ENCODE measurements at regions of chr4 and their contacts with region 1.

Region 1: DNA sequence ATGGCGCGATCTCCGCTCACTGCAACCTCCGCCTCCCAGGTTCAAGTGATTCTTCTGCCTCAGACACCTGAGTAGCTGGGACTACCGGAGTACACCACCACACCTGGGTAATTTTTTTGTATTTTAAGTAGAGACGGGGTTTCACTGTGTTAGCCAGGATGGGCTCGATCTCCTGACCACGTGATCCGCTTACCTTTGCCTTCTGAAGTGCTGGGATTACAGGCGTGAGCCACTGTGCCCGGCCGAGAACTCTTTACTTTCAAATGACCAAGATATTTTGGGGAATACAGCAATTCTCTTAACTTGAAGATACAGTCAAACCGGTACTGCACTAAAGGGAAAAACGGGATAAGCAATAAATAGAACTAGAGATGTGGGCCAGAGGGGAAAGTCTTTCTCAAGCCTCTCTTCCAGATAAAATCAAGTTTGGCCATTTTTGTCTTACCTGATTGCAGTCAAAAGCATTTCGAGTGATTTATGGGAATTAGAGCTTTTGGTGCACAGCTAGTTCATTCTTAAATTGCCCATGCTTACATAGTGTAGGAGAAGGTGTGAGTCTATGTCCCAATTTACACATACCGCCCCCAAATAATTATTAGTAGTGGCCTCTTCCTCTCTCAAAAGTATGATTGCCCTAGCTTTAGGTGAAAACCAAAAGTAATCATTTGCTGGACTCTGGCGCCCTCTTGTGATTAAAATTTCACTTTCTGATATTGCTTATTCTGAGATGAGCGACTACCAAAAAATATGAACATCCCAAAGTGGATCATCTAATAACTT is 53.2 kb upstream of the ABCG2 start:
- DNase-seq: peak in 1 of 2 donors; percentile 53
- H3K4me3 ChIP-seq: no peak overlapping the region
- CTCF ChIP-seq: peak in 1 of 3 donors; percentile 25
- POLR2A ChIP-seq: no peak

Region 2: DNA sequence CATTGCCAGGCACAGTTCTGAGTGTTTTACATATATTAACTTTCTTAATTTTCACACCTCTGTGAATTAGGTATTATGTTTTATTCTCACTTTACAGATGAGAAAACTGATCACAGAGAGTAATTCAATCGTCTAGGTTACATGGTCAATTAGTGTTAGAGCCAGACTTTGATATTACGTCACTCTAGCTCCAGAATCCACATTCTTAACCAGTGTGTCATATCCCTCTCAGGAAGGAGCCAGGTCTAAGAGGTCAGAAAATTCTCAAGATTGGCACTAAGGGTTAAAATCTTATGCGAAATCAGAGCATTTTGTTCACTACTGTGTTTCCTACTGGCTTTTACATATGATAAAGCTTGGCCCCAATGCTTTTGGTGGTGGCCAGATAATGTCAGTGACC is 554.1 kb before region 1 on chr4:
- intact Hi-C with region 1: no loop called
- DNase-seq: no peak
- H3K4me3 ChIP-seq: no peak overlapping the region
- CTCF ChIP-seq: no peak
- POLR2A ChIP-seq: no peak

Region 3: DNA sequence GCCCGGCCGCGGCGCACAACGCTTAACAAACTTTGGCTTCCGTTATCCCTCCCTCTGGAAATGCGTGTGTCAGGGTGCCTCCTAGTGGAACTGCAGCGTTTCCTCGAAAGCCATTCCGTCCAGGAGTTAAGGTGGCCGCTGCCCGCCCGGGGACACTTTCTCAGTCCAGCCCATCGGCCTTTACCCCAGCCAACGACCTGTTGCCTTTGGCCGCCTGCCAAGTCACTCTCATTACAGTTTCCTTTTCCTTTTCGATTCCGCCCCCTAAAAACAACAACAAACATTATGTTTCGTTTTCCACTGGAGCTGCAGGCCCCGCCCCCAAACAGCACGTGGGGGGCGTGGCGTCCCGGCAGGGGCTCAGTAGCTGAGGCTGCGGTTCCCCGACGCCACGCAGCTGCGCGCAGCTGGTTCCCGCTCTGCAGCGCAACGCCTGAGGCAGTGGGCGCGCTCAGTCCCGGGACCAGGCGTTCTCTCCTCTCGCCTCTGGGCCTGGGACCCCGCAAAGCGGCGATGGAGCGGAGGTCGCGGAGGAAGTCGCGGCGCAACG is 245.2 kb after region 1 on chr4 and contains the start of gene HERC5:
- intact Hi-C with region 1: loop called (anchors 5 kb)
- DNase-seq: peak; percentile 85 to 98
- H3K4me3 ChIP-seq: peak within 1 kb of the TSS; percentile 46
- CTCF ChIP-seq: peak in 1 of 3 donors; percentile 45
- POLR2A ChIP-seq: no peak
- total RNA-seq, gene HERC5: 0.51 to 2.7 (median 1.9) TPM

Region 4: DNA sequence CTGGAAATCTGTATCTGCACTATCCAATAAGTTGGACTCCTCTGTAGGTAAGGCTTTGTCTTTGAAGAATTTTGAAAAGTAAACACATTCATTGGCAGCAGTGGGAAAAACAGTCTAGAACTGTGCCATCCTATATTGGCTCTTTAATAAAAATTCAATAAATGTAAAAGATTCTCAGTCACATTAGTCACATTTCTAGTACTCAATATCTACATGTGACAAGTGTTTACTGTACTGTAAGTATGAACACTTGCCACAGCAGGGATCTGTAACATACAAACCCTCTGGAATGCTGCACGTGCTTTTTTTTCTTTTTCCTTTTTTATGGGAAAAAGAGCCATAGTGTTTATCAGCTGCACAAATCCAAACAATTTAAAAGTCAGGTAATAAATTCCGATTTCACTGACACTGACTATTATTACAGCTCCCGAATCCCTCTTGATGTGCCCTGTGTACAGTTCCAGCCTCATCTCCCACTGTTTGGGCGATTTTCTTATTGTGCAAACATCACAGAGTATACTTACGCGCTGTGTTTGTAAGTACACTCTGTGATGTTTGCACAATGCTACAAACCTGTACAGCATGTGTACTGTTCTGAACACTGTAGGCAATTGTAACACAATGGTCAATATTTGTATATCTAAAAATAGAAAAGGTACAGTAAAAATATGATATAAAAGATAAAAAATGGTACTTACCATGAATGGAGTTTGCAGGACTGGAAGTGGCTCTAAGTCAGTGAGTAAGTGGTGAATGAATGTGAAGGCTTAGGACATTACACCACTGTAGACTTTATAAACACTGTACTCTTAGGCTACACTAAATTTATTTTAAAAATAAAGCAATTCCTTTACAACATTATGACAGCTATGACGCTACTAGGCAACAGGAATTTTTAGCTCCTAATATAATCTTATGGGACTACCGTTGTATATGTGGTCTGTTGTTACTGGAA is 303.2 kb after region 1 on chr4:
- intact Hi-C with region 1: loop called (anchors 5 kb)
- DNase-seq: no peak
- H3K4me3 ChIP-seq: no peak overlapping the region
- CTCF ChIP-seq: no peak
- POLR2A ChIP-seq: no peak

Measured in lower leg skin (tissue), 4 donors.